ENCODE measurements at regions of chr6 and their contacts with region 1.

Region 1: DNA sequence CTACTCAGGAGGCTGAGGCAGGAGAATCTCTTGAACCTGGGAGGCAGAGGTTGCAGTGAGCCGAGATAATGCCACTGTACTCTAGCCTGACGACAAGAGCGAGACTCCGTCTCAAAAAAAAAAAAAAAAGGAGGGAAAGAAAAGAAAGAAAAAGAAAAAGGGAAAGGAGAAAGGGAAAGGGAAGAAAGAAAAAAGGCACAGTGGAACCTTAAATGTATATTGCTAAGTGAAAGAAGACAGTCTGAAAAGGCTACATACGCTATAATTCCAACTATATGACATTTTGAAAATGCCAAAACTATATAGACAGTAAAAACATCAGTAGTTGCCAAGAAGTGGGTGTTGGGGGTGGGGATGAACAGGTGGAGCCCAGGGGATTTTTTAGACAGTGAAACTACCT is 16.2 kb downstream of the PPIL4 start:
- DNase-seq: no peak
- H3K4me3 ChIP-seq: no peak overlapping the region
- H3K27ac ChIP-seq: no peak overlapping the region
- H3K4me1 ChIP-seq: no peaks in the 10 kb centered on the region
- H3K27me3 ChIP-seq: no peaks in the 10 kb centered on the region

Region 2: DNA sequence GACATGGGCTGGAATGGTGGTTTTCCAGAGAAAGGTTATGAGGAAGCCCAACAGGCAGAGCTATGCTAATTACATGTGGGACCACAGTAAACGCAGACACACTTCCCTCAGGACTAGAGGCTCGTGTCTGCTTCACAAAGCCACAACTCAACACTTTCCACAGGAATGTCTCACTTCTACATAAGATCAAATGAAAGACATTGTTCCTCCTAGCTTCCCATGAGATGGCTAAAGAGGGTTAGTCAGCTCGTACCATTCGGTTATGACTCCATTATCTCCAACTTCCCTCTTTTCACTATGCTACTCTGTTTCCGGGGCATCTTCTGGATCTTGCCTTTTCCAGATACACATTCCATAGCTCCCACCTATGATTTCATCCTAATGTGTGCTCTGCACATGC is 15.7 kb before region 1 on chr6:
- CTCF ChIA-PET with region 1: interaction called, 14 read pairs
- POLR2A ChIA-PET with region 1: no interaction called
- DNase-seq: no peak
- H3K4me3 ChIP-seq: no peak overlapping the region
- H3K27ac ChIP-seq: no peak overlapping the region
- H3K4me1 ChIP-seq: peaks cover 0 to 2% (median 0%) of the 10 kb centered on the region in 4 experiments
- H3K27me3 ChIP-seq: no peaks in the 10 kb centered on the region

Measured in common myeloid progenitor, CD34-positive (primary cell).